T-cell (primary cell): ENCODE measurements at regions of chr12 and their contacts with region 1.

Region 1: GRCh38 chr12:95205685-95206084 is 11.6 kb downstream of the FGD6 start:
- DNase-seq: no peak
- ATAC-seq: no peak
- H3K4me3 ChIP-seq: no peak overlapping the region
- H3K4me3 Mint-ChIP-seq: no peak overlapping the region
- H3K27ac ChIP-seq: no peak overlapping the region
- H3K27ac Mint-ChIP-seq: no peak overlapping the region
- H3K4me1 ChIP-seq: peaks cover 0 to 12% of the 10 kb centered on the region in 2 experiments
- H3K4me1 Mint-ChIP-seq: peaks cover 8 to 19% (median 9%) of the 10 kb centered on the region in 3 donors
- H3K27me3 ChIP-seq: no peaks in the 10 kb centered on the region
- H3K27me3 Mint-ChIP-seq: peaks cover 0 to 2% of the 10 kb centered on the region in 2 donors

Region 2: DNA sequence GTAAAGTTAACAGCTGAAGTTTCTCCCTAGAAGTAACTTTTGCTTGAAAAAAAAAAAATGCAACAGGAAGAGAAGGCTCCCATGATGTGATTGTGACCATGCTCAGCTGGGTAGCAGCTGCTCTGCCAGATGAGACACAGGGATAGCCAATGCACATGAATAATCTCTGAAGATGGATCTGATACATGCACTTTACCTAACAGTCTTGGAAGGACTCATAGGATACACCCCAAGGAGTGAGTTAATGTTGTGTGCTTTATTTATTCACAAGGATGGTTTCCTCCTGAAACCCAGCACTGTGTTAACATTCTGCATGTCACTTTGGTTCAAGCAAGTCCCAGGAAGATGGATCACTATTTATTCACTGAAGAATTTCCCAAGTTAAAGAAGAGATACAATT is 248.7 kb before region 1 on chr12:
- CTCF ChIA-PET with region 1: interaction called in 1 of 2 experiments, 10 read pairs
- POLR2A ChIA-PET with region 1: no interaction called
- DNase-seq: no peak
- ATAC-seq: no peak
- H3K4me3 ChIP-seq: no peak overlapping the region
- H3K4me3 Mint-ChIP-seq: no peak overlapping the region
- H3K27ac ChIP-seq: no peak overlapping the region
- H3K27ac Mint-ChIP-seq: no peak overlapping the region
- H3K4me1 ChIP-seq: no peaks in the 10 kb centered on the region
- H3K4me1 Mint-ChIP-seq: peaks cover 0 to 6% (median 2%) of the 10 kb centered on the region in 3 donors
- H3K27me3 ChIP-seq: peaks cover 0 to 5% of the 10 kb centered on the region in 2 experiments
- H3K27me3 Mint-ChIP-seq: peaks cover 18 to 21% of the 10 kb centered on the region in 2 donors